K562 (cell line): ENCODE measurements at regions of chr2 and their contacts with region 1.

Region 1: GRCh38 chr2:202109737-202110184 is 36.7 kb downstream of the KIAA2012 start:
- DNase-seq: no peak
- ATAC-seq: no peak
- H3K4me3 ChIP-seq: no peak overlapping the region
- H3K27ac ChIP-seq: no peak overlapping the region
- H3K4me1 ChIP-seq: no peaks in the 10 kb centered on the region; a peak in 1 of 5 replicates
- H3K27me3 ChIP-seq: peaks cover 3 to 33% of the 10 kb centered on the region in 2 experiments; a peak in 4 of 5 replicates
- CTCF ChIP-seq: no peak
- EP300 ChIP-seq: no peak
- POLR2A ChIP-seq: no peak
- RAD21 ChIP-seq: no peak

Region 2: GRCh38 chr2:202158796-202159195 is 49.0 kb after region 1 on chr2:
- CTCF ChIA-PET with region 1: no interaction called
- POLR2A ChIA-PET with region 1: no interaction called
- in situ Hi-C with region 1: no loop called
- intact Hi-C with region 1: loop called (anchors 5 kb)
- DNase-seq: no peak
- ATAC-seq: peak; percentile 63
- H3K4me3 ChIP-seq: no peak overlapping the region
- H3K27ac ChIP-seq: no peak overlapping the region
- H3K4me1 ChIP-seq: no peaks in the 10 kb centered on the region
- H3K27me3 ChIP-seq: peaks cover 3 to 21% of the 10 kb centered on the region in 2 experiments; a peak in 3 of 5 replicates
- CTCF ChIP-seq: peak in 2 of 3 experiments; percentile 19 to 20; a peak in 2 of 6 replicates
- EP300 ChIP-seq: no peak
- POLR2A ChIP-seq: no peak
- RAD21 ChIP-seq: peak in 1 of 2 experiments; percentile 53; a peak in 2 of 4 replicates